Head of caudate nucleus (tissue), 42 donors: ENCODE measurements at regions of chr10 and their contacts with region 1.

Region 1: DNA sequence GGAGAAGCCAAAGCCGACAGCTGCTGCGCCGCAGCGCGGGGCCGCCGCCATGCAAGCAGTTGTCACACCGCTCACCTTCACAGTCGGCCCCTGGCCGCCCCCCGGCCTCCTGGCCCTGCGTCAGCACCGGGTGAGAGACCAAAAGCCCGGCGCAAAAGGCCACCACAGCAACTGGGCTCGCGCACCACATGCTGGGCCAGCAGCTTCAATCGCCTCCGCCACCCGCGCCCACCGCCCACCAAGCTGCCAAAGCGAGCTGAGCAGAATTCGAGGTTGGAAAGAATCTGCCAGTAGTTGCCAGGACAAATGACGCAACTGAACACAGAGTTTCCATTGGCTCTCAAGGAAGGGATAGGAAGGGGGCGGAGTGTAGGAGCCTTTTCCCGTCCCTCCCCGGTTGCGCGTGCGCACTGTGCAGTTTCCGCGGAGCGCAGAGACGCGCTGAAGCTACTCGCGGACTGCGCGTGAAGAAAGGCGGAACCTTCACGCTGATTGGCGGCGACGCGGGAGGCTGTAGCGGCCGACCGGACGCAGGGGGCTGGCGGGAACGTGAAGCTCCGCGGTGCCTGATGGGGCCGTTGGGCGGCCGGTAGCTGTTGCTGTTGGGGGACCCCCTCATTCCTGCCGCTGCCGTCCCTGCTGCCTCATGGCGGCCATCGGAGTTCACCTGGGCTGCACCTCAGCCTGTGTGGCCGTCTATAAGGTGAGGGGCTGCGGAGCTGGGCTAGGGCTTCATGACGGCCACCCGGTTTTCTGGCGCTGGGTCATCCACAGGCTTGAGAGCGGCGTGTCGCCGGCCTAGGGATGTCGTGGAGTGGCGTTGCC is at the starts of genes CDNF, HSPA14 and MSANTD7:
- DNase-seq: peak; percentile 96 to 100 (median 99)

Region 2: GRCh38 chr10:14604181-14605142 is 233.5 kb before region 1 on chr10:
- intact Hi-C with region 1: loop called (anchors 5 kb)
- DNase-seq: peak; percentile 47 to 95 (median 88)

Region 3: DNA sequence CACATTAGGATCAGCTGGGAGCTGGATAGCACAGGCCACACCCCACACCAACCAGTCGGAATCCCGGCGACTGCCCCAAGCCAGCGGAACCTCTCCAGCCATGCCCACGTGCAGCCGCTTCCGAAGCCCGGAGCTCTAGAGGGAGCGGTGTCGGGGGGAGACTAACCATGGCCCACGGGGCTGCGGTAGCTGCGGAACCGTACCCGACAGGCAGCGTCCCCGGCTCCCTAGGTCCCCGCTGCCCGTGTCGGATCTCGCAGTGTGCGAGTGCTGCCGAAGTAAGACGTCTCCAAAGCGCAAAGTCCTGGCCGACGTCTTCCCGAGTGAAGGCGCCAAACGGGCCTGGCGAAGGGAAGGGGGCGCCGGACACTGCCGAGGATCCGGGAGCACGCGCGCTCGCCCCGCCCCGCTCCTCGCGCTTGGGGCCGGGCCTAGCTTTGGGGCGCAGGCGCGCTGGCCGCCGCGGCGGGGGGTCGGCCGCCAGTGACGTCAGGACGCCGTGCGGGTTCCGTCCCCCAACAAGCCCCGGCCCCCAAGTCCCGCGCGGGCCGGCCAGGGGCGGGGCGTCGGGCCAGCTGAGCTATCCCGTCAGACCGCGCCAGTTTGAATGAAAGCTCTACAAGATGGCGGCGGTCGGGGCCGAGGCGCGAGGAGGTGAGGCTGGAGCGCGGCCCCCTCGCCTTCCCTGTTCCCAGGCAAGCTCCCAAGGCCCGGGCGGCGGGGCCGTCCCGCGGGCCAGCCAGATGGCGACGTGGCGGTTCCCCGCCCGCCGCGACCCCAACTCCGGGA is 40.5 kb after region 1 on chr10 and contains the start of gene SUV39H2:
- intact Hi-C with region 1: loop called (anchors 2 kb)
- DNase-seq: peak; percentile 86 to 98 (median 96)

Region 4: GRCh38 chr10:14954001-14954770 is 116.2 kb after region 1 on chr10 and contains the start of gene DCLRE1C:
- intact Hi-C with region 1: loop called (anchors 5 kb)
- DNase-seq: peak; percentile 82 to 96 (median 92)